Heart left ventricle (tissue), 16 donors: ENCODE measurements at regions of chr11 and their contacts with region 1.

Region 1: GRCh38 chr11:65391007-65391406 is 4.6 kb downstream of the FRMD8 start:
- DNase-seq: peak in 3 of 5 donors; percentile 62 to 67 (median 66)
- ATAC-seq: peak; percentile 31 to 67 (median 46)
- H3K4me3 ChIP-seq: peak overlapping the region in 9 of 12 donors; percentile 11 to 48 (median 25)
- H3K27ac ChIP-seq: peak overlapping the region; percentile 72 to 92 (median 86)
- H3K4me1 ChIP-seq: peaks cover 17 to 66% (median 49%) of the 10 kb centered on the region in 12 donors
- H3K27me3 ChIP-seq: no peaks in the 10 kb centered on the region
- CTCF ChIP-seq: peak in 3 of 12 donors; percentile 6 to 17 (median 7)
- POLR2A ChIP-seq: no peak

Region 2: DNA sequence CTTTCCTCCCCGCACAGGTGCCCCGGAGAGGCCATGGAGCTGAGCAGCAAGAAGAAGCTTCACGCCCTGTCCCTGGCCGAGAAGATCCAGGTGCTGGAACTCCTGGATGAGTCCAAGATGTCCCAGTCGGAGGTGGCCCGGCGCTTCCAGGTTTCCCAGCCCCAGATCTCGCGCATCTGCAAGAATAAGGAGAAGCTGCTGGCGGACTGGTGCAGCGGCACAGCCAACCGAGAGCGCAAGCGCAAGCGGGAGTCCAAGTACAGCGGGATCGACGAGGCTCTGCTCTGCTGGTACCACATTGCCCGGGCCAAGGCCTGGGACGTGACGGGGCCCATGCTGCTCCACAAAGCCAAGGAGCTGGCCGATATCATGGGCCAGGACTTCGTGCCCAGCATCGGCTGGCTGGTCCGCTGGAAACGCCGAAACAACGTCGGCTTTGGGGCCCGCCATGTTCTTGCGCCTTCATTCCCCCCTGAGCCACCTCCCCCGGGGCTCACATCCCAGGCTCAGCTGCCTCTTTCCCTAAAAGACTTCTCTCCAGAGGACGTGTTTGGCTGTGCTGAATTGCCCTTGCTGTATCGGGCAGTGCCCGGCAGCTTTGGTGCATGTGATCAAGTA is 35.1 kb before region 1 on chr11:
- intact Hi-C with region 1: loop called in 1 of 10 experiments (anchors 2 kb)
- DNase-seq: peak in 3 of 5 donors; percentile 43 to 70 (median 70)
- ATAC-seq: peak in 2 of 4 donors; percentile 4 to 14
- H3K4me3 ChIP-seq: peak overlapping the region; percentile 58 to 84 (median 78)
- H3K27ac ChIP-seq: peak overlapping the region in 4 of 12 donors; percentile 13 to 64 (median 29)
- H3K4me1 ChIP-seq: peaks cover 0 to 49% (median 25%) of the 10 kb centered on the region in 12 donors
- H3K27me3 ChIP-seq: peaks cover 0 to 6% (median 0%) of the 10 kb centered on the region in 9 donors
- CTCF ChIP-seq: no peak
- POLR2A ChIP-seq: no peak

Region 3: GRCh38 chr11:65403607-65404121 is 12.7 kb after region 1 on chr11:
- intact Hi-C with region 1: loop called in 1 of 10 experiments (anchors 2 kb)
- DNase-seq: peak in 1 of 5 donors; percentile 45
- ATAC-seq: peak in 3 of 4 donors; percentile 16 to 52 (median 52)
- H3K4me3 ChIP-seq: no peak overlapping the region
- H3K27ac ChIP-seq: peak overlapping the region; percentile 24 to 88 (median 72)
- H3K4me1 ChIP-seq: peaks cover 0 to 25% (median 13%) of the 10 kb centered on the region in 12 donors
- H3K27me3 ChIP-seq: no peaks in the 10 kb centered on the region
- CTCF ChIP-seq: no peak
- POLR2A ChIP-seq: no peak

Region 4: GRCh38 chr11:65410936-65411688 is 20.1 kb after region 1 on chr11:
- intact Hi-C with region 1: loop called in 1 of 10 experiments (anchors 2 kb)
- DNase-seq: peak in 3 of 5 donors; percentile 18 to 55 (median 26)
- ATAC-seq: peak in 1 of 4 donors; percentile 7
- H3K4me3 ChIP-seq: no peak overlapping the region
- H3K27ac ChIP-seq: peak overlapping the region in 3 of 12 donors; percentile 67 to 71 (median 68)
- H3K4me1 ChIP-seq: peaks cover 0 to 30% (median 18%) of the 10 kb centered on the region in 12 donors
- H3K27me3 ChIP-seq: no peaks in the 10 kb centered on the region
- CTCF ChIP-seq: no peak
- POLR2A ChIP-seq: no peak

Region 5: DNA sequence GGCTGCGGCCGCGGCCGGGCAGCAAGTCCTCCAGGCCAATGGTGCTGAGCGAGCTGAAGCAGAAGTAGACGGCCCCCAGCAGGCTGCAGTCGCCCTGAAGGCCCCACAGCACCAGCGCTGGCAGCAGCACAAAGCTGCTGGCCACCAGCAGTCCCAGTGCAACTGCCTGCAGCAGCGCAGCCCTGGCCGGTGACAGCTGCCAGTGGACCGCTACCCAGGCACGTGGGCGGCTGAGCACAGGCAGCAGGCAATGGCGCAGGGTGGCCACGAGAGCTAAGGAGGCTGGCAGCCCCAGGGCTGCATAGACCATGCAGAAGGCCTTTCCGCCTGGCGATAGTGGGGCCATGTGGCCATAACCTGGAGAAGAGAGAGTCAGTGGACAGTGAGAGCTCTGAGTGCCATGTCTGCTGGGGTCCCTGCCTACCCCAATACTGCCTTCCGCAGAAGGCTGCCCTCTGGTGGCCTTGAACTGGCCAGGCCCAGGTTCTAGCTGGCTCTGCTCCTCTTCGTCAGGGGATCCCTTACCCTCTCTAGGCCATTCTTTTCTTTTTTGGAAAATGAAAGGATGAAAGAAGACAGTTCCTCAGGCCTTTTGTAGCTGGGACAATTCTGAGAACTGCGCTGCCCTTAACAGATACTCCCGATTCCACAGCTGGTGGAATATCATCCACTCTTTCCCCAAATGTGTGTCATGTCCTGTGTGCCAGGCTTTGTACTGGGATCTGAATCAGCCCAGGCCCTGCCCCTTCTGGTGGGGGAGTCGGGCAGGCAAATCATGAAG is 202.7 kb after region 1 on chr11:
- intact Hi-C with region 1: no loop called
- DNase-seq: peak in 2 of 5 donors; percentile 63 to 71
- ATAC-seq: peak in 3 of 4 donors; percentile 23 to 47 (median 45)
- H3K4me3 ChIP-seq: no peak overlapping the region
- H3K27ac ChIP-seq: peak overlapping the region in 5 of 12 donors; percentile 3 to 54 (median 20)
- H3K4me1 ChIP-seq: peaks cover 0 to 51% (median 33%) of the 10 kb centered on the region in 12 donors
- H3K27me3 ChIP-seq: no peaks in the 10 kb centered on the region
- CTCF ChIP-seq: peak; percentile 56 to 76 (median 66)
- POLR2A ChIP-seq: no peak